MCF 10A (cell line): ENCODE measurements at regions of chr12 and their contacts with region 1.

Region 1: GRCh38 chr12:60257063-60257462 is 661.2 kb downstream of the SLC16A7 start:
- DNase-seq: peak; percentile 43
- H3K4me3 Mint-ChIP-seq: no peak overlapping the region
- H3K27ac Mint-ChIP-seq: no peak overlapping the region
- H3K4me1 Mint-ChIP-seq: no peaks in the 10 kb centered on the region
- H3K27me3 Mint-ChIP-seq: no peaks in the 10 kb centered on the region
- CTCF ChIP-seq: peak; percentile 16

Region 2: DNA sequence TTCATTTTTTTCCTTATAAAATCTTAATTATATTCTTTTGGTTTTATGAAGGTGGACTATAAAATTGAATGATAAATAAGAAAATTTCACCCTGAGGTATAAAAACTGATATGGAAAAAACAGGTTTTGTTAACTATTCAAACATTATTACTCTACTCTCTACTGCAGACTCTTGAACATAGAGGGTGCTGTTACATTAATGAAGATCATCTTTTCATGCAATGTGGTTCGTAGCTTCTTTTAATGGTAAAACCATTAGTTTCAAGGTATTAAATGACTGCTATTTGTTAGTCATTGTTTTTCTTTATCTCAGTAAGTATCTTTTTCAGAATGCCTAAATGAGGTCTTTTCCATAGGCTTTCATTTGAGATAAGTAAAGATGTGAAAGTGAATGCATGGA is 150.8 kb before region 1 on chr12:
- CTCF ChIA-PET with region 1: no interaction called
- POLR2A ChIA-PET with region 1: no interaction called
- intact Hi-C with region 1: loop called (anchors 10 kb)
- DNase-seq: peak; percentile 17
- H3K4me3 Mint-ChIP-seq: no peak overlapping the region
- H3K27ac Mint-ChIP-seq: no peak overlapping the region
- H3K4me1 Mint-ChIP-seq: no peaks in the 10 kb centered on the region
- H3K27me3 Mint-ChIP-seq: no peaks in the 10 kb centered on the region
- CTCF ChIP-seq: peak; percentile 49

Region 3: DNA sequence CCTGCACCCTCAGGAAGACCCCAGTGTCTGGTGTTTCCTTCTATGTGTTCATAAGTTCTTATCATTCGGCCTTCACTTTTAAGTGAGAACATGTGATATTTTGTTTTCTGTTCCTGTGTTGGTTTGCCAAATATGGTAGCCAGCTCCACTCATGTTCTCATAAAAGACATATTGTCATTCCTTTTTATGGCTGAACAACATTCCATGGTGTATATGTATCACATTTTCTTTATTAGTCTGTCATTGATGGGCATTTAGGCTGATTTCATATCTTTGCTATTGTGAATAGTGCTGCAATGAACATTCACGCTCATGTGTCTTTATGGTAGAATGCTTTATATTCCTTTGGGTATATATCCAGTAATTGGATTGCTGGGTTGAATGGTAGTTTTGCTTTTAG is 16.2 kb before region 1 on chr12:
- CTCF ChIA-PET with region 1: no interaction called
- POLR2A ChIA-PET with region 1: no interaction called
- intact Hi-C with region 1: no loop called
- DNase-seq: no peak
- H3K4me3 Mint-ChIP-seq: no peak overlapping the region
- H3K27ac Mint-ChIP-seq: no peak overlapping the region
- H3K4me1 Mint-ChIP-seq: no peaks in the 10 kb centered on the region
- H3K27me3 Mint-ChIP-seq: no peaks in the 10 kb centered on the region
- CTCF ChIP-seq: no peak